ENCODE measurements at regions of chrX and their contacts with region 1.

Region 1: DNA sequence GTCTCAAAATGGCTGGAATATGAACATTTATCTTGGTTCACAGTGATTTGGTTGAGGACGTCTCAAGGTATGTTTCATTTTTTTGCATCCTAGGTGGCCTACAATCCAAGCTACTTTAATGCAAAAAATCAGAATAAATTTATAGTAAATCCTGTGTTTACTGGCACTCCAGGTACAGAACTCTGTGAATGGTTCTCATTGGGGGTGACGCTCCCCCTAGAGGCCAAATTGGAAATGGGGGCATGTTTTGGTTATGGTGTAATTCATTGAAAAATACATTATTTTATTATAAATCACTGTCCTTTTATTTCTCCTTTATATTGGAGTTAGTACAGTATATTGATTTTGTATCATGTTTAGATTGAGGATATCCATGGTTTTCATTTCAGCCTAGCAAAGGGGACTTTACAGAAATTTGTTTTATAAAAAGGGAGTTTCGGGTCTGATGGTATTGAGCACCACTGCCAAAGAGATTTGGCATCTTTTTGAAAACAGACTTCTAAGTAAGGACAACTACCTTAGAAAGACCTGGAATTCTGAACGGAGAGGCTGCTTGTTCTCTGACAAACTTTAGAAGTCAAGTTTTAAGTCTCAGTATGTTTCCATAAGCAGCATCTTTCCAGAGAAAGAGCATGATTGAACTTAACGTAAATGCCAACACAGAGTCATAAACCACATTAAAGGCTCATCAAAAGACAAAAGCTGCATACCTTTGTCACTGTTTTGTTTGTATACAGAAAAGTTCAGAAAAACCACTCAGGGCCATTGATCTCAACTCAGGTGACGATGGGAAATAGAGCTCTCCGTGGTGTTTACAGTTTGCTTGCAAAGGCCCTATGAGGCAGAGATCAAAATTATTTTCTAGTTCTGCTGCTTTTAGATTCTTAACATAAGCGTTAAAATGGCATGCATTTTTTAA is 19.4 kb downstream of the MTM1 start:
- DNase-seq: peak in 1 of 2 donors; percentile 71
- ATAC-seq: peak in 1 of 3 donors; percentile 54
- H3K4me3 ChIP-seq: no peak overlapping the region
- H3K4me3 Mint-ChIP-seq: no peak overlapping the region
- H3K27ac ChIP-seq: no peak overlapping the region
- H3K27ac Mint-ChIP-seq: no peak overlapping the region
- H3K4me1 ChIP-seq: no peaks in the 10 kb centered on the region
- H3K4me1 Mint-ChIP-seq: peaks cover 0 to 5% of the 10 kb centered on the region in 2 donors
- H3K27me3 ChIP-seq: no peaks in the 10 kb centered on the region
- H3K27me3 Mint-ChIP-seq: no peaks in the 10 kb centered on the region
- CTCF ChIP-seq: peak; percentile 67

Region 2: DNA sequence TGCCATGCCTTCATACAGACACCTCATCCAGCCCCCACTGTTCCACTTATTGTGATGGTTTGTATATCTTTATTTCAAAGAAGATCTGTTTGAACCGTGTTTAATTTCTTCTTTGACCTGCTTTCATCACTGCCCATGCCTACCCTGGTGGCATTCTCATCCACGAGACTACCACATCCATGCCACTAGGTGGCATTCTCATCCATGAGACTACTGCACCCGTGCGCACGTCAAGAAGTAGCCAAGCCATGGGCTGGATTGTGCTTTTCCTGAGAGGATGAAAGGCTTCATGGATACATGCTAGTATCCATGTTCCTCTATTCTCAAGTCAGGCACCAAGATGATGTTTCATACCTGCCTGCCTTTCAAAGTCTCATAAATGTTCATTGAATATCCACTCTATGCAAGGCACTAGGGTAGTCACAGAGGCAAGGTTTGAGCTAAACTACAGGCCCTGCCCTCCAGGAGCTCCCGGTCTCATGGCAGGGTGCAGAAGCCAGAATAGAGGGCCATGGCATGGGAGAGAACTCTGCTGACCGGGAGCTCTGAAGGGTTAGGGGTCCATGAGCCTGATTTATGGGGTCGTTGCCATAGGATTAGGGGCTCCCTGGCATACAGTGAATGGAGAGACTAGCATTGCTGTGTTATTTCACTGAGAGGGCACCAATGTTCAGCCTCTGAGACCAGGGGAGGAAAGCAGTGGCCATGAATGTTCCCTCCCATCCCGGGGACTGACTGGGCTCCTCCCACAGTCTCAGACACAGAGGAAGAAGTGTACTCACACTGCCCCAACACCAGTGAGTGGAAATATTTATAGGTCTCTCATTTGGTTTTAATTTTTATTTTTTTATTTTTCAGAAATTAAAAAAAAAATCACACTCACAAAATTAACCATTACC is 624.7 kb before region 1 on chrX:
- intact Hi-C with region 1: loop called (anchors 5 kb)
- DNase-seq: peak in 1 of 2 donors; percentile 43
- ATAC-seq: peak in 2 of 3 donors; percentile 52 to 55
- H3K4me3 ChIP-seq: no peak overlapping the region
- H3K4me3 Mint-ChIP-seq: no peak overlapping the region
- H3K27ac ChIP-seq: no peak overlapping the region
- H3K27ac Mint-ChIP-seq: no peak overlapping the region
- H3K4me1 ChIP-seq: no peaks in the 10 kb centered on the region
- H3K4me1 Mint-ChIP-seq: no peaks in the 10 kb centered on the region
- H3K27me3 ChIP-seq: no peaks in the 10 kb centered on the region
- H3K27me3 Mint-ChIP-seq: no peaks in the 10 kb centered on the region
- CTCF ChIP-seq: peak; percentile 48

Region 3: DNA sequence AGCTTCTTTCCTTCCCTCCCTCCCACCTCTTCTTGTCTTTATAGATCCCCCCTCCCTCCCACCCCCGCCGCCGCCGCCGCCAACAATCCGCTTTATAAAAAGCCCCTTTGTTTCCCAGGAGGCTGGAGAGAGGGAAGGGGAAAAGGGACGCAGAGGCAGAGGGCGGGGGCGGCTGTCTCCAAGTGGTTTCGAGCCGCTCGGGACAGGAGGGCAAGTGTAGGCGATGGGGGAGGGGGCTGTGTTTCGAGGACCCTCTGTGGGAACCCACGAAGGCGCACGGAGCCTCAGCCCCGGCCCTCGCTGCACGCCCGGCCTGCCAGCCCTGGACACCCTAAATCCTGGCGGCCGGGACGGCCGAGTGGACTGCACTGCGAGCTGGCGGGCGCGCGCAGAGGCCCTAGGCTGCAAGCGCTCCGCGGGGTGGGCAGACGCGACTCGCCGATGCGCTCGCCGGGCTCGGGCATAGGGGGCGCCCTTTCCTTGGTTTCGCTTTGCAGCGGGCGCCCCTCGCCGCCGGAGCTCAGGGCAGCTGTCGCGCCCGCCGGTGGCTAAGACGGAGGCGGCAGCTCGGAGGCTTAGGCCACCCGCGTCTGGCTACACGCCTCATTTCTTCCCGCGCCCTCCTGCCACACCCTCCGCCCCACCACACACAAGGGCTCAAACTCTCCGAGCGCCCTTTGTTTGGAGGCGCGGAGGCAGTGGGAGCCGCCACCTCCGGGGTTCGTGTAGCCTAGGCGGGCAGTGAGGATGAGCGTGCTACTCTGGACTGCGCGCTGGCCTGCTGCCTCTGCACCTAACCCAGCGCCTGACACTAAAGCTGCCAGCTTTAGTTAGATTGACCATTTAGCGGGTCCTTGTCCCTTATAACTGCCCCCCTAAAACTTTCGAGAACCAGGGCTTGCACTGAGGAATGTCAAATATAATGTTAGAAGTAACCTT is 222.5 kb before region 1 on chrX:
- intact Hi-C with region 1: loop called (anchors 10 kb)
- DNase-seq: peak; percentile 50 to 74
- ATAC-seq: peak; percentile 37 to 50 (median 38)
- H3K4me3 ChIP-seq: peak overlapping the region; percentile 29
- H3K4me3 Mint-ChIP-seq: peak overlapping the region; percentile 77
- H3K27ac ChIP-seq: no peak overlapping the region
- H3K27ac Mint-ChIP-seq: peak overlapping the region in 1 of 2 donors; percentile 74
- H3K4me1 ChIP-seq: peaks cover 47% of the 10 kb centered on the region
- H3K4me1 Mint-ChIP-seq: peaks cover 20 to 38% of the 10 kb centered on the region in 2 donors
- H3K27me3 ChIP-seq: peaks cover 10% of the 10 kb centered on the region
- H3K27me3 Mint-ChIP-seq: peaks cover 10 to 16% of the 10 kb centered on the region in 2 donors
- CTCF ChIP-seq: peak; percentile 31

Measured in natural killer cell (primary cell).